PC-3 (cell line): ENCODE measurements at regions of chr4 and their contacts with region 1.

Region 1: DNA sequence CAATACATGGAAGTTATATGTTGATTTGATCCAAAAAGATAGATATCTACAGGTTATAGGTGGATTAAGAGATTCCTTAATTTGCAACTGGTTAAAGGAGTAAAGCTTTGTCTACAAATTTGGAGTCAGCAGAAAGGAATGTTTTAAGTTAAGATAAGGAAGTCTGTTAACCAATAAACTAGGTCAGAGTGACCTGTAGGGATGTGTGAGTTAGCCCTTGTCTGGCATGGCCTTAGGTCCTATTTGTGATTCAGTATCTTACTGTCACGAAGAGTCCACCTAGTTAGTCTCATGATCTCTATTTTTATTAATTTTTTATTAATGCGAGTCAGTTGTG is 230.8 kb downstream of the INPP4B start:
- DNase-seq: peak; percentile 97
- ATAC-seq: peak; percentile 90
- H3K4me3 ChIP-seq: peak overlapping the region; percentile 50
- H3K27ac ChIP-seq: peak overlapping the region; percentile 98
- H3K4me1 ChIP-seq: peaks cover 44% of the 10 kb centered on the region
- H3K27me3 ChIP-seq: no peaks in the 10 kb centered on the region
- CTCF ChIP-seq: no peak

Region 2: GRCh38 chr4:142474335-142475087 is 140.8 kb before region 1 on chr4:
- CTCF ChIA-PET with region 1: no interaction called
- POLR2A ChIA-PET with region 1: no interaction called
- intact Hi-C with region 1: loop called (anchors 2 kb)
- DNase-seq: peak; percentile 98
- ATAC-seq: peak; percentile 86
- H3K4me3 ChIP-seq: peak overlapping the region; percentile 63
- H3K27ac ChIP-seq: peak overlapping the region; percentile 99
- H3K4me1 ChIP-seq: peaks cover 50% of the 10 kb centered on the region
- H3K27me3 ChIP-seq: no peaks in the 10 kb centered on the region
- CTCF ChIP-seq: no peak

Region 3: GRCh38 chr4:142516670-142517526 is 98.4 kb before region 1 on chr4:
- CTCF ChIA-PET with region 1: no interaction called
- POLR2A ChIA-PET with region 1: no interaction called
- intact Hi-C with region 1: loop called (anchors 1 kb)
- DNase-seq: peak; percentile 76
- ATAC-seq: peak; percentile 45
- H3K4me3 ChIP-seq: no peak overlapping the region
- H3K27ac ChIP-seq: peak overlapping the region; percentile 16
- H3K4me1 ChIP-seq: peaks cover 47% of the 10 kb centered on the region
- H3K27me3 ChIP-seq: no peaks in the 10 kb centered on the region
- CTCF ChIP-seq: no peak

Region 4: GRCh38 chr4:142549726-142550463 is 65.4 kb before region 1 on chr4:
- CTCF ChIA-PET with region 1: no interaction called
- POLR2A ChIA-PET with region 1: no interaction called
- intact Hi-C with region 1: loop called (anchors 2 kb)
- DNase-seq: peak; percentile 96
- ATAC-seq: peak; percentile 92
- H3K4me3 ChIP-seq: peak overlapping the region; percentile 1; the same call in 1 of the 2 replicates
- H3K27ac ChIP-seq: peak overlapping the region; percentile 93
- H3K4me1 ChIP-seq: peaks cover 36% of the 10 kb centered on the region
- H3K27me3 ChIP-seq: no peaks in the 10 kb centered on the region
- CTCF ChIP-seq: peak; percentile 20; the same call in 1 of the 2 replicates

Region 5: GRCh38 chr4:142719854-142720541 is 104.7 kb after region 1 on chr4:
- CTCF ChIA-PET with region 1: no interaction called
- POLR2A ChIA-PET with region 1: no interaction called
- intact Hi-C with region 1: loop called (anchors 1 kb)
- DNase-seq: peak; percentile 93
- ATAC-seq: peak; percentile 67
- H3K4me3 ChIP-seq: no peak overlapping the region
- H3K27ac ChIP-seq: peak overlapping the region; percentile 76
- H3K4me1 ChIP-seq: peaks cover 33% of the 10 kb centered on the region
- H3K27me3 ChIP-seq: no peaks in the 10 kb centered on the region
- CTCF ChIP-seq: peak; percentile 88